ENCODE measurements at regions of chr12 and their contacts with region 1.

Region 1: DNA sequence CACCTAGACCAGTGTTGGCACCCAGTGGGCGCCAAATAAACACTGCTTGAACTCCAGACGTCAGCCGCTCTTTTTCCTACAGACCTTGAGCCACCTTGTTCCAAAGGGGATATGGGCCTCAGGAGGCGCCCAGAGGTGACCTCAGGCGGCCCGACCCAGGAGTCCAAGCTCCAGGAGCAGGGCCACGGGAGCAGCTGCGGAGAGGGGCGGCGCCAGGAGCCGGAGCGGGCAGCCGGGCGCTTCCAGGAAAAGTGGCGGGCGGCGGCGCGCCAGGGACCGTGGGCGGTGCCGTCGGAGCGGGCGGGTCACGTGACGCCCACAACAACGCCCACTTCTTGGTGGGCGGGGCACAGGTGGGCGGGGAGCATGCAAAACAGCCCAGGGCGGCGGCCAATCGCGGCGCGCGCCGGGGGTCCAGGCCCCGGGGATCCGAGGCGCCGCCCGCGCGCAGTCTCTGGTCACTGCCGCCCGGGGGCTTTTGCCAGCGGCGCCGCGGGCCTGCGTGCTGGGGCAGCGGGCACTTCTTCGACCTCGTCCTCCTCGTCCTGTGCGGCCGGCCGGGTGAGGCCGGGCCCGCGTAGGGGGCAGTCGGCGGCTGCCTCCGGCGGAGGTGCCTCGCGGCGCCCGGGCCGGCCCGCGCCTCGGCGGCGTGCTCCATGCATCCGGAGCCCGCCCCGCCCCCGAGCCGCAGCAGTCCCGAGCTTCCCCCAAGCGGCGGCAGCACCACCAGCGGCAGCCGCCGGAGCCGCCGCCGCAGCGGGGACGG is at the start of gene ORAI1:
- DNase-seq: peak; percentile 84 to 98 (median 93)
- ATAC-seq: peak; percentile 77 to 87 (median 80)
- H3K4me3 ChIP-seq: peak within 1 kb of the TSS; percentile 85 to 96
- H3K4me3 Mint-ChIP-seq: peak within 1 kb of the TSS; percentile 93 to 95 (median 93)
- H3K27ac ChIP-seq: peak within 1 kb of the TSS; percentile 89
- H3K27ac Mint-ChIP-seq: peak within 1 kb of the TSS; percentile 96 to 97
- H3K4me1 ChIP-seq: peaks cover 25 to 52% of the 10 kb centered on the region in 2 experiments
- H3K4me1 Mint-ChIP-seq: peaks cover 44 to 51% (median 45%) of the 10 kb centered on the region in 3 donors
- H3K27me3 ChIP-seq: no peaks in the 10 kb centered on the region
- H3K27me3 Mint-ChIP-seq: no peaks in the 10 kb centered on the region
- total RNA-seq, gene ORAI1: 38.9 to 76.5 (median 59.0) TPM

Region 2: GRCh38 chr12:121637231-121637914 is 11.1 kb after region 1 on chr12:
- CTCF ChIA-PET with region 1: interaction called in 1 of 2 experiments, 18 read pairs
- POLR2A ChIA-PET with region 1: interaction called in 1 of 2 experiments, 4 read pairs
- DNase-seq: peak in 34 of 35 experiments; percentile 18 to 68 (median 46)
- ATAC-seq: peak; percentile 76 to 91 (median 84)
- H3K4me3 ChIP-seq: peak overlapping the region; percentile 29 to 36
- H3K4me3 Mint-ChIP-seq: peak overlapping the region; percentile 53 to 79 (median 62)
- H3K27ac ChIP-seq: peak overlapping the region; percentile 84
- H3K27ac Mint-ChIP-seq: peak overlapping the region; percentile 91 to 96
- H3K4me1 ChIP-seq: peaks cover 30 to 76% of the 10 kb centered on the region in 2 experiments
- H3K4me1 Mint-ChIP-seq: peaks cover 60 to 73% (median 62%) of the 10 kb centered on the region in 3 donors
- H3K27me3 ChIP-seq: no peaks in the 10 kb centered on the region
- H3K27me3 Mint-ChIP-seq: no peaks in the 10 kb centered on the region

Measured in T-cell (primary cell).